ENCODE measurements at regions of chr6 and their contacts with region 1.

Region 1: GRCh38 chr6:108492131-108492766 is 68.5 kb upstream of the FOXO3 start:
- DNase-seq: no peak
- H3K4me3 Mint-ChIP-seq: no peak overlapping the region
- H3K27ac Mint-ChIP-seq: no peak overlapping the region
- H3K4me1 Mint-ChIP-seq: no peaks in the 10 kb centered on the region
- H3K27me3 Mint-ChIP-seq: no peaks in the 10 kb centered on the region

Region 2: DNA sequence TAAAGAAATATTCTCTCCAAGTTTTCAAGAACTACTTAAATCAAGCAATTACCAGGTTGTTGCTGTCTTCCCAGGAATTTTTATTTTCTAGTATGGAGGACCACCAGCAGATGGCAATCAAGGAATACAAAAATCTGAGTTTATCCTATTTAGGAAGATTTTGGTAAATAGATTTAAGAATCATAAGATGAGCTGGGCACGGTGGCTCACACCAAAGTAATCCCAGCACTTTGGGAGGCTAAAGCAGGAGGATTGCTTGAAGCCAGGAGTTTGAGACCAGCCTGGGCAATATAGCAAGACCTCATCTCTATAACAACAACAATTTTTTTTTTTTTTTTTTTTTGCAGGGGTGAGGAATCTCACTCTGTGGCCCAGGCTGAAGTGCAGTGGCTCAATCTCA is 515.0 kb before region 1 on chr6:
- CTCF ChIA-PET with region 1: interaction called, 11 read pairs
- POLR2A ChIA-PET with region 1: no interaction called
- intact Hi-C with region 1: no loop called
- DNase-seq: no peak
- H3K4me3 Mint-ChIP-seq: no peak overlapping the region
- H3K27ac Mint-ChIP-seq: no peak overlapping the region
- H3K4me1 Mint-ChIP-seq: no peaks in the 10 kb centered on the region
- H3K27me3 Mint-ChIP-seq: no peaks in the 10 kb centered on the region

Region 3: GRCh38 chr6:108168501-108169463 is 323.5 kb before region 1 on chr6:
- CTCF ChIA-PET with region 1: interaction called, 8 read pairs
- POLR2A ChIA-PET with region 1: no interaction called
- intact Hi-C with region 1: loop called (anchors 5 kb)
- DNase-seq: peak; percentile 37
- H3K4me3 Mint-ChIP-seq: peak overlapping the region; percentile 48
- H3K27ac Mint-ChIP-seq: no peak overlapping the region
- H3K4me1 Mint-ChIP-seq: peaks cover 40% of the 10 kb centered on the region
- H3K27me3 Mint-ChIP-seq: peaks cover 84% of the 10 kb centered on the region

Region 4: GRCh38 chr6:108174371-108175175 is 317.7 kb before region 1 on chr6:
- CTCF ChIA-PET with region 1: interaction called, 13 read pairs
- POLR2A ChIA-PET with region 1: no interaction called
- intact Hi-C with region 1: loop called (anchors 5 kb)
- DNase-seq: peak; percentile 43
- H3K4me3 Mint-ChIP-seq: no peak overlapping the region
- H3K27ac Mint-ChIP-seq: no peak overlapping the region
- H3K4me1 Mint-ChIP-seq: peaks cover 18% of the 10 kb centered on the region
- H3K27me3 Mint-ChIP-seq: peaks cover 79% of the 10 kb centered on the region

Region 5: GRCh38 chr6:108250240-108250866 is 241.9 kb before region 1 on chr6:
- CTCF ChIA-PET with region 1: interaction called, 4 read pairs
- POLR2A ChIA-PET with region 1: no interaction called
- intact Hi-C with region 1: loop called (anchors 10 kb)
- DNase-seq: no peak
- H3K4me3 Mint-ChIP-seq: no peak overlapping the region
- H3K27ac Mint-ChIP-seq: no peak overlapping the region
- H3K4me1 Mint-ChIP-seq: peaks cover 38% of the 10 kb centered on the region
- H3K27me3 Mint-ChIP-seq: no peaks in the 10 kb centered on the region

Region 6: GRCh38 chr6:108661430-108661829 is 169.2 kb after region 1 on chr6:
- CTCF ChIA-PET with region 1: no interaction called
- POLR2A ChIA-PET with region 1: no interaction called
- intact Hi-C with region 1: no loop called
- DNase-seq: no peak
- H3K4me3 Mint-ChIP-seq: no peak overlapping the region
- H3K27ac Mint-ChIP-seq: no peak overlapping the region
- H3K4me1 Mint-ChIP-seq: peaks cover 29% of the 10 kb centered on the region
- H3K27me3 Mint-ChIP-seq: no peaks in the 10 kb centered on the region

Measured in activated CD4-positive, alpha-beta memory T cell treated with anti-CD3 and anti-CD28 coated beads for 36 hours (primary cell).